Mammary epithelial cell (primary cell): ENCODE measurements at regions of chr3 and their contacts with region 1.

Region 1: GRCh38 chr3:39000008-39000450 is 51.7 kb downstream of the SCN11A start:
- DNase-seq: peak; percentile 92
- H3K4me3 ChIP-seq: no peak overlapping the region
- H3K27ac ChIP-seq: no peak overlapping the region
- H3K4me1 ChIP-seq: peaks cover 4% of the 10 kb centered on the region
- H3K27me3 ChIP-seq: no peaks in the 10 kb centered on the region
- CTCF ChIP-seq: peak; percentile 90 to 94

Region 2: DNA sequence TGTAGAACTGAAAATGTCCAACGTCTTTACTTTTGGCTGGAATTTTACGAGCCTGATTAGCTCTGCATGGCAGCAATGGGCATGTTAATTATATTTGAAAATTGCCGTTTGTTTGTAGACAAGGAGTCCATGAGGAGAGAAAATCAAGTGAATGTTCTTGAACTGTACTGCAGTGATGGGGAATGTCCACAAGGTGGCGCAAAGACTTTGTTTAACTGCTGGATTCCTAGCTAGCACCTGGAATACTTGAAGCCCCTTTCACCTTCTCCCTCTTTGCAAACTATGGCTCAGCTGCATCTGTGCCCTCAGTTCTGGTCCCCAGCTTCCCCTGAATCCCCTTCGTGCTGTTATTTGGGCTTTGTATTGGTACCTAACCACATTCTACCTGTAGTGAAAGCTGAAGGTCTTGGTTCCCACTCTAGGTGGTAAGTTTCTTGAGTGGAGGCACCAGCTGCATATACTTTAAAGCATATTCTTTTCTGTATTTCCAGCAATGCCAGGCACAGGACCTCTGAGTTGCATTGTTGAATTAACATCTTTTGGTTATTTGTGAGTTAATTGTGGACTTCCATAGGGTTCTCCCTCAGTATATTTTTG is 478.5 kb before region 1 on chr3:
- CTCF ChIA-PET with region 1: no interaction called
- dilution Hi-C with region 1: no loop called
- in situ Hi-C with region 1: loop called in 1 of 2 experiments (anchors 25 kb)
- intact Hi-C with region 1: loop called (anchors 5 kb)
- DNase-seq: peak; percentile 54
- H3K4me3 ChIP-seq: no peak overlapping the region
- H3K27ac ChIP-seq: no peak overlapping the region
- H3K4me1 ChIP-seq: no peaks in the 10 kb centered on the region
- H3K27me3 ChIP-seq: no peaks in the 10 kb centered on the region
- CTCF ChIP-seq: peak; percentile 81 to 90

Region 3: DNA sequence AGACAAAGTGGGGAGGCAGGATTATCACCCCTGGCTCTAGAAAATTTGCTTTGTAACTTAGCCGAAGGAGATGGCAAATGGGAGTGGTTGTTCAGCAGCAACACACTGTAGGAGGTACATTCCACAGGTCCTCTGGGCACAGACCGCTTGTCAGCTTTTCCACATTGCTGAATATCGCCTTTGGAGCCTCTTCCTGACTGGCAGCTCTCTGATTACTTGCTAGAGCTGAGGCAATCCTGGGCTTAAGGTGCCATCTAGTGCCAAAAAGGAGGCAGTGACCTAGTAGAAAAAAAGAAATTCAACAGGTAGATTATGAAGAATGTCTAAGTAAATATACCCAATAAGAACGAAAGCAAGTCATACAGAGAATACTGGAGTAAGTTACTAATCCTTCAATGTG is 337.5 kb before region 1 on chr3:
- CTCF ChIA-PET with region 1: interaction called, 10 read pairs
- dilution Hi-C with region 1: no loop called
- in situ Hi-C with region 1: no loop called
- intact Hi-C with region 1: loop called (anchors 2 kb)
- DNase-seq: peak; percentile 57
- H3K4me3 ChIP-seq: no peak overlapping the region
- H3K27ac ChIP-seq: no peak overlapping the region
- H3K4me1 ChIP-seq: peaks cover 11% of the 10 kb centered on the region
- H3K27me3 ChIP-seq: no peaks in the 10 kb centered on the region
- CTCF ChIP-seq: peak; percentile 72 to 84

Region 4: DNA sequence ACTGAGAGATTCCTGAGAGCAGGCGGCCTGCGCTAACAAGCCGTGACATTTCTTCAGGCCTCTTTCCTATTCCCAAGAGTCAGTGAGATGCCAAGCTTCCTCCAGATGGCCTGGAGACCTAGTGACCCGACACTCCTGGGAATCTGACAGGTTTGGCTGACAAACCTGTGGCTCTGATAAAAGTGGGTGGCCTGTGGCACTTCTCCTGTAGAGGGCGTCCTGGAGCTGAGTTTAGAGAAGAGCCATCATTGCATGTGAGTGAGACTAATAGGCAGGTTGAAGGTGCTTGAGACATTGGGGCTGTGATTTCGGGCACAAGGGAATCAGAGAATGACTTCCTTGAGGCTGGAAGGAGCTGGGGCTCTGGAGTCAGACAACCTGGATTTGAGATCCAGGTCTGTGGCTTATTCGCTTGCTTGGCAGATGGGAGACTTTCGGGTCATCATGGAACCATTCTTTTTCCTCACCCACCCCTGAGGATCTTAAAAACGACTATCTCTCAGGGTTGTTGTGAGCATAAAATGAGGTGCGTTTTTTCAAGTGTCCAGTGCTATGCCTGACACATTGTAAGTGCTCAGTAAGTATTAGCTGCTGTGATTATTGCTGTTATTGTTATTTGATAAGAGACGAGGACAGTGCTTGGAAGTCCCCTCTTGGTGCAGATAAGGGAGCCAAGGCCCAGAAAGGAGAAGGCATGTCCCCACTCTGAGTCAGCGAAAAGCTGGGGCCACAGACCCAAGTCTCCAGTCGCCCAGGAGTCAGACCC is 261.2 kb before region 1 on chr3:
- CTCF ChIA-PET with region 1: interaction called, 5 read pairs
- dilution Hi-C with region 1: no loop called
- in situ Hi-C with region 1: loop called (anchors 10 to 25 kb)
- intact Hi-C with region 1: loop called (anchors 1 kb)
- DNase-seq: peak; percentile 32
- H3K4me3 ChIP-seq: no peak overlapping the region
- H3K27ac ChIP-seq: no peak overlapping the region
- H3K4me1 ChIP-seq: no peaks in the 10 kb centered on the region
- H3K27me3 ChIP-seq: no peaks in the 10 kb centered on the region
- CTCF ChIP-seq: peak; percentile 84 to 87

Region 5: GRCh38 chr3:38907426-38907825 is 92.6 kb before region 1 on chr3:
- CTCF ChIA-PET with region 1: no interaction called
- dilution Hi-C with region 1: no loop called
- in situ Hi-C with region 1: no loop called
- intact Hi-C with region 1: loop called (anchors 5 kb)
- DNase-seq: peak; percentile 43
- H3K4me3 ChIP-seq: no peak overlapping the region
- H3K27ac ChIP-seq: no peak overlapping the region
- H3K4me1 ChIP-seq: no peaks in the 10 kb centered on the region
- H3K27me3 ChIP-seq: peaks cover 9% of the 10 kb centered on the region
- CTCF ChIP-seq: no peak

Region 6: GRCh38 chr3:38966811-38967692 is 33.0 kb before region 1 on chr3:
- CTCF ChIA-PET with region 1: no interaction called
- dilution Hi-C with region 1: no loop called
- in situ Hi-C with region 1: no loop called
- intact Hi-C with region 1: no loop called
- DNase-seq: peak; percentile 76
- H3K4me3 ChIP-seq: no peak overlapping the region
- H3K27ac ChIP-seq: no peak overlapping the region
- H3K4me1 ChIP-seq: peaks cover 11% of the 10 kb centered on the region
- H3K27me3 ChIP-seq: no peaks in the 10 kb centered on the region
- CTCF ChIP-seq: no peak

Region 7: DNA sequence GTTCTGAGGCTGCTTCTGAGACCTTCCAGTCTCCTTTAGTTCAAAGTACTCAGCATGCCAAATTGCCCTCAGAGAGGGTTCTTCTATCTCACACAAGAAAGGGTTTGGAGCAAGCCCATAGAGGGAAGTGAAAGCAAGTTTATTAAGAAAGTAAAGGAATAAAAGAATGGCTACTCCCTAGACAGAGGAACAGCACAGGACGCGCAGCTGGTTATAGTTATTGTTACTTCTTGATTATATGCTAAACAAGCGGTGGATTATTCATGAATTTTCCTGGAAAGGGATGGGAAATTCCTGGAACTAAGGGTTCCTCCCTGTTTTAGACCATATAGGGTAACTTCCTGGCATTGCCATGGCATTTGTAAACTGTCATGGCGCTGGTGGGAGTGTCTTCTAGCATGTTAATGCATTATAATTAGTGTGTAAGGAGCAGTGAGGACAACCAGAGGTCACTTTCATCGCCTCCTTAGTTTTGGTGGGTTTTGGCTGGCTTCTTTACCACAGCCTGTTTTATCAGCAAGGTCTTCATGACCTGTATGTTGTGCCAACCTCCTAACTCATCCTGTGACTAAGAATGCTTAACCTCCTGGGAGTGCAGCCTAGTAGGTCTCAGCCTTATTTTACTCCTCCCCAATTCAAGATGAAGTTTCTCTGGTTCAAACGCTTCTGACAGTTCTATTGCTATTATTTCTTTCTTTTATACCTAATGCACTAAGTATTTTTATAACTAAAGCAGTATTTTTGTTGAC is 25.4 kb after region 1 on chr3:
- CTCF ChIA-PET with region 1: interaction called, 6 read pairs
- dilution Hi-C with region 1: no loop called
- in situ Hi-C with region 1: no loop called
- intact Hi-C with region 1: loop called (anchors 1 kb)
- DNase-seq: no peak
- H3K4me3 ChIP-seq: no peak overlapping the region
- H3K27ac ChIP-seq: no peak overlapping the region
- H3K4me1 ChIP-seq: peaks cover 9% of the 10 kb centered on the region
- H3K27me3 ChIP-seq: peaks cover 7% of the 10 kb centered on the region
- CTCF ChIP-seq: no peak